Caco-2 (cell line): ENCODE measurements at regions of chr7 and their contacts with region 1.

Region 1: GRCh38 chr7:50632561-50633413 is 67.6 kb upstream of the DDC start:
- DNase-seq: peak; percentile 61 to 72
- H3K4me3 ChIP-seq: no peak overlapping the region
- H3K4me3 Mint-ChIP-seq: no peak overlapping the region
- H3K27ac Mint-ChIP-seq: no peak overlapping the region
- H3K4me1 ChIP-seq: peaks cover 9% of the 10 kb centered on the region
- H3K4me1 Mint-ChIP-seq: peaks cover 21% of the 10 kb centered on the region
- H3K27me3 ChIP-seq: no peaks in the 10 kb centered on the region
- H3K27me3 Mint-ChIP-seq: no peaks in the 10 kb centered on the region
- CTCF ChIP-seq: peak; percentile 90 to 94

Region 2: DNA sequence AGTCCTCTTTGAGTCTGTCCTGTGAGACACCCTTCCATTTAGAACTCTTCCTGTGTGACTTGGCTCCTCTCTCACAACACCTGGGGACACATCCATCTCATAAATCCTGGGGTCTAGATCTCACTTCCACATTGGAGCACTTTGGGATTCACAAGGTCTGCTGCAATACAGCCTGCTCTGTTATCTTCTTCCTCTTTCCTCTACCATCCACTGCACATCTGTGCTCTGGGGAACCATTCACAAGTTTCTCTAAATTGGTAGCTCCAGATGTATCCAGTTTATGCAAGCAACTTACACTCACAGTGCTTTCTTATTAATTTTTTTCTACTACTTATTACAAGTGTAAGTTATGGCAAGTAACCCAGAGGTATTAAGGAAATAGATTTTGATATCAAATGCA is 177.1 kb before region 1 on chr7:
- CTCF ChIA-PET with region 1: no interaction called
- POLR2A ChIA-PET with region 1: no interaction called
- intact Hi-C with region 1: no loop called
- DNase-seq: no peak
- H3K4me3 ChIP-seq: no peak overlapping the region
- H3K4me3 Mint-ChIP-seq: no peak overlapping the region
- H3K27ac Mint-ChIP-seq: no peak overlapping the region
- H3K4me1 ChIP-seq: 0 out of 2 replicates have a peak, but pooled peaks cover 3% of the 10 kb centered on the region
- H3K4me1 Mint-ChIP-seq: no peaks in the 10 kb centered on the region
- H3K27me3 ChIP-seq: no peaks in the 10 kb centered on the region
- H3K27me3 Mint-ChIP-seq: no peaks in the 10 kb centered on the region
- CTCF ChIP-seq: no peak

Region 3: GRCh38 chr7:50552921-50553320 is 79.9 kb before region 1 on chr7:
- CTCF ChIA-PET with region 1: no interaction called
- POLR2A ChIA-PET with region 1: no interaction called
- intact Hi-C with region 1: no loop called
- DNase-seq: peak; percentile 59 to 63
- H3K4me3 ChIP-seq: no peak overlapping the region
- H3K4me3 Mint-ChIP-seq: peak overlapping the region; percentile 18
- H3K27ac Mint-ChIP-seq: no peak overlapping the region
- H3K4me1 ChIP-seq: peaks cover 61% of the 10 kb centered on the region
- H3K4me1 Mint-ChIP-seq: peaks cover 44% of the 10 kb centered on the region
- H3K27me3 ChIP-seq: no peaks in the 10 kb centered on the region
- H3K27me3 Mint-ChIP-seq: no peaks in the 10 kb centered on the region
- CTCF ChIP-seq: no peak

Region 4: DNA sequence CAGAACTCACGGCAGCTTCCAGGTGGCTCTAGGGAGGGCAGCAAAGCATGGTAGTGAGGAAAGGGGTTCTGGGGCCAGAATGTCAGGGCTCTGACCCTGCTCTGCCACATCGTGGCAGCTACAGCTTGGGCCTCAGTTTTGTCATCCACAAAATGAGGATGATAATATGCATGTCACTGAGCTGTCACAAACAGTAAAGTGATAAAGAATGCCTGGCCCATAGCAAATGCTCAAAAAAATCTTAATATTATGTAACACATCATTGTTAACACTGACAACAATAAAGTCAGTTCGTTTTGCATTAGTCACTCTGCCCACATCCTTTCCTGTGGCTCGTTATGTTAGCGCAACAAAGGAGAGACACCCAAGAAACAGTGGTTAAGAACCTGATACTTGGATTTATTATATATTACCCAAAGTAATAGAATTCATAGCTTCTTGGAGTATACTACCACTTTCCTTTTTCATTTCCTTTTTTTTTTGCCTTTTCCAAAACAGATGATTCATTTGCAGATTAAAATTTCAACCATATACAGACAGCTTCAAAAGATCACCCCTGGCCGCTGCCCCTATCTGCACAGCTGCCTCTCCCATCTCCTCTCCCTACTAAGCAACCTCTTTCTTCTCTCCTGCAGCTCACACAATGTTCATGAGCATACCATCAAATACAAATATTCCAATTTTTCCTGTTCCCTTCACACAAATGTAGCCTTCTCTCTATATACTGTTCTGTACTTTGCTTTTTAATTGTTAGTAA is 22.1 kb before region 1 on chr7:
- CTCF ChIA-PET with region 1: interaction called, 7 read pairs
- POLR2A ChIA-PET with region 1: no interaction called
- intact Hi-C with region 1: loop called (anchors 2 kb)
- DNase-seq: no peak
- H3K4me3 ChIP-seq: no peak overlapping the region
- H3K4me3 Mint-ChIP-seq: no peak overlapping the region
- H3K27ac Mint-ChIP-seq: no peak overlapping the region
- H3K4me1 ChIP-seq: peaks cover 9% of the 10 kb centered on the region
- H3K4me1 Mint-ChIP-seq: peaks cover 13% of the 10 kb centered on the region
- H3K27me3 ChIP-seq: no peaks in the 10 kb centered on the region
- H3K27me3 Mint-ChIP-seq: no peaks in the 10 kb centered on the region
- CTCF ChIP-seq: no peak

Region 5: DNA sequence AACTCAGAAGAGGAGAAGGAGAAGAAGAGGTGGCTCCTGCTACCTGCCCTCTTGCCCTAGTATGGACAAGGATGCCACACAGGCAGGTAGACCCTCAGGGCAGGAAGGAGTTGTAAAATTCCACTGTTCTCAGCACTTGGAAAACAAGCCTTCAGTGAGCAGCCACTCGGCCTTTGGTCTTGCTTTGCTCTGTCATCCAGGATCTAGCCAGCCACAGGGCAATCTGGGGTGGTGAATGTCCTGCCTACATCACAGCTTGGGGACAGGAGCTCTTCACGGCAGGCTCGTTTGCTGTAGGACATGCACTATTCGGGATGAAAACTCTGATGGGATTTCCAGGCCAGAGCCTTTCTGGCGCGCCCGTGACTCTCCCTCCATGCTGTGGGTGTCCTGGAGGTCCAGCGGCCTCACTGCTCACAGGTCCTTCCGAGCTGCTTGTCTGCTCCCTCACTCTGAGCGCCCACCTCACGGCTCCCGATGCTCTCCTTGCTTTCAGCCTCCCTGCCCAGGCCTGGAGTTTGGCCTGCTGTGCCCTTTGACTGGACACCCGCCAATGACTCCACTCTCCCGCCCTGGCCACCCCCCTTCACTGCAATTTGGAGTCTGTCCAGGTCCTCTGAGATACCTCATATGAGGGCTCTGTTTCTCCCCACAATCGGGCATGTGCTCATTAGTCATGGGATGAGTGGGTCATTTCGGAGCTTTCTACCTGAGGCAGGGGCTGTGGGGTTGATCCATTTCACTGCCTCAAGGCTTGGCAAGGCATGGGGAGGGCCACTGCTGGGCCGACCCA is 377.1 kb after region 1 on chr7:
- CTCF ChIA-PET with region 1: interaction called, 3 read pairs
- POLR2A ChIA-PET with region 1: no interaction called
- intact Hi-C with region 1: loop called (anchors 10 kb)
- DNase-seq: no peak
- H3K4me3 ChIP-seq: no peak overlapping the region
- H3K4me3 Mint-ChIP-seq: no peak overlapping the region
- H3K27ac Mint-ChIP-seq: no peak overlapping the region
- H3K4me1 ChIP-seq: no peaks in the 10 kb centered on the region
- H3K4me1 Mint-ChIP-seq: peaks cover 8% of the 10 kb centered on the region
- H3K27me3 ChIP-seq: no peaks in the 10 kb centered on the region
- H3K27me3 Mint-ChIP-seq: no peaks in the 10 kb centered on the region
- CTCF ChIP-seq: no peak